Naive thymus-derived CD4-positive, alpha-beta T cell (primary cell): ENCODE measurements at regions of chr12 and their contacts with region 1.

Region 1: DNA sequence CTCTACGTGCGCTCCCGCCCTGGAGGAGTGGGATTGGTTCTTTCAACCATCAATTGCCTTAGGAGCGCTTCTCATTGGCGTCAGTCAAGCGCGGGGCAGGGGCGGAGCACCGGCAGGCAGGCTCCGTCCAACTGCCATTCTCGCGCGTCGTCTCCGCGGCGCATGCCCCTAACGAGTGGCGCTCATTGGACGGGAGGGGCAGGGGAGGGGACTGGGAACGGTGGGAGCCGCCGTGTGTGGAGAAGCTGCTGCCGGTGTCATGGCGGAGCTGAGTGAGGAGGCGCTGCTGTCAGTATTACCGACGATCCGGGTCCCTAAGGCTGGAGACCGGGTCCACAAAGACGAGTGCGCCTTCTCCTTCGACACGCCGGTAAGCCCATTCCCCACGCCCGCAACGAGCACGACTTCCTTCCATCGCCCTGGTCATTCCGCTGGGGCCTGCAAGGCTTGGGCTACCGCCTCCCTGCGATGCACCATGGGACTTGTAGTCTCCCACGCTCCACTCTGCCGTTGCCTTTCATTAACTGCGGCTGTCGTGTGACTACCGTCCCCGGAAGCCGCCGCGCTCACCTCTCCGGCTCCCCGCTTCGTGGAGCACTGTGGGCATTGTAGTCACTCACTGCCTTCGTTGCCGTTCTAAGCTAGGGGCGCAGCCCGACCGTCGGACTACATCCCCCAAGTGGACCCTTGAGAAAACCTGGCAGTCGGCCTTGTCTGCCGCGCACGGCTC is at the start of gene USP5:
- DNase-seq: peak; percentile 87 to 100 (median 99)
- ATAC-seq: peak; percentile 87
- H3K4me3 ChIP-seq: peak within 1 kb of the TSS; percentile 87
- H3K4me3 Mint-ChIP-seq: peak within 1 kb of the TSS; percentile 89 to 100 (median 94)
- H3K27ac ChIP-seq: peak within 1 kb of the TSS; percentile 85
- H3K27ac Mint-ChIP-seq: peak within 1 kb of the TSS; percentile 89 to 99 (median 97)
- H3K4me1 ChIP-seq: peaks cover 16 to 18% of the 10 kb centered on the region in 2 donors
- H3K4me1 Mint-ChIP-seq: peaks cover 12 to 38% (median 28%) of the 10 kb centered on the region in 7 donors
- H3K27me3 ChIP-seq: no peaks in the 10 kb centered on the region
- H3K27me3 Mint-ChIP-seq: no peaks in the 10 kb centered on the region
- total RNA-seq, gene USP5: 58.0 to 134 (median 71.1) TPM

Region 2: DNA sequence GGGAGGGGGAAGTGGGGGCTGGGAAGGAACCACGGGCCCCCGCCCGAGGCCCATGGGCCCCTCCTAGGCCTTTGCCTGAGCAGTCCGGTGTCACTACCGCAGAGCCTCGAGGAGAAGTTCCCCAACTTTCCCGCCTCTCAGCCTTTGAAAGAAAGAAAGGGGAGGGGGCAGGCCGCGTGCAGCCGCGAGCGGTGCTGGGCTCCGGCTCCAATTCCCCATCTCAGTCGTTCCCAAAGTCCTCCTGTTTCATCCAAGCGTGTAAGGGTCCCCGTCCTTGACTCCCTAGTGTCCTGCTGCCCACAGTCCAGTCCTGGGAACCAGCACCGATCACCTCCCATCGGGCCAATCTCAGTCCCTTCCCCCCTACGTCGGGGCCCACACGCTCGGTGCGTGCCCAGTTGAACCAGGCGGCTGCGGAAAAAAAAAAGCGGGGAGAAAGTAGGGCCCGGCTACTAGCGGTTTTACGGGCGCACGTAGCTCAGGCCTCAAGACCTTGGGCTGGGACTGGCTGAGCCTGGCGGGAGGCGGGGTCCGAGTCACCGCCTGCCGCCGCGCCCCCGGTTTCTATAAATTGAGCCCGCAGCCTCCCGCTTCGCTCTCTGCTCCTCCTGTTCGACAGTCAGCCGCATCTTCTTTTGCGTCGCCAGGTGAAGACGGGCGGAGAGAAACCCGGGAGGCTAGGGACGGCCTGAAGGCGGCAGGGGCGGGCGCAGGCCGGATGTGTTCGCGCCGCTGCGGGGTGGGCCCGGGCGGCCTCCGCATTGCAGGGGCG is 318.0 kb before region 1 on chr12 and contains the start of gene GAPDH:
- CTCF ChIA-PET with region 1: no interaction called
- POLR2A ChIA-PET with region 1: no interaction called
- intact Hi-C with region 1: loop called in 1 of 2 experiments (anchors 1 kb)
- DNase-seq: peak; percentile 66 to 94 (median 83)
- ATAC-seq: peak; percentile 66
- H3K4me3 ChIP-seq: peak within 1 kb of the TSS; percentile 97
- H3K4me3 Mint-ChIP-seq: peak within 1 kb of the TSS; percentile 90 to 99 (median 94)
- H3K27ac ChIP-seq: peak within 1 kb of the TSS; percentile 81
- H3K27ac Mint-ChIP-seq: peak within 1 kb of the TSS; percentile 92 to 100 (median 94)
- H3K4me1 ChIP-seq: peaks cover 31 to 43% of the 10 kb centered on the region in 2 donors
- H3K4me1 Mint-ChIP-seq: peaks cover 28 to 59% (median 42%) of the 10 kb centered on the region in 7 donors
- H3K27me3 ChIP-seq: no peaks in the 10 kb centered on the region
- H3K27me3 Mint-ChIP-seq: peaks cover 0 to 2% (median 0%) of the 10 kb centered on the region in 5 donors
- total RNA-seq, gene GAPDH: 330 to 4,503 (median 379) TPM

Region 3: GRCh38 chr12:6688999-6689882 is 162.8 kb before region 1 on chr12 and contains the start of gene ZNF384:
- CTCF ChIA-PET with region 1: no interaction called
- POLR2A ChIA-PET with region 1: interaction called, 31 read pairs
- intact Hi-C with region 1: loop called (anchors 1 kb)
- DNase-seq: peak; percentile 83 to 98 (median 96)
- ATAC-seq: peak; percentile 91
- H3K4me3 ChIP-seq: peak within 1 kb of the TSS; percentile 84
- H3K4me3 Mint-ChIP-seq: peak within 1 kb of the TSS; percentile 85 to 100 (median 96)
- H3K27ac ChIP-seq: peak within 1 kb of the TSS; percentile 91
- H3K27ac Mint-ChIP-seq: peak within 1 kb of the TSS; percentile 93 to 99 (median 98)
- H3K4me1 ChIP-seq: peaks cover 17 to 19% of the 10 kb centered on the region in 2 donors
- H3K4me1 Mint-ChIP-seq: peaks cover 37 to 69% (median 53%) of the 10 kb centered on the region in 7 donors
- H3K27me3 ChIP-seq: no peaks in the 10 kb centered on the region
- H3K27me3 Mint-ChIP-seq: no peaks in the 10 kb centered on the region
- total RNA-seq, gene ZNF384: 62.8 to 98.2 (median 85.4) TPM

Region 4: GRCh38 chr12:6825398-6826124 is 26.5 kb before region 1 on chr12:
- CTCF ChIA-PET with region 1: interaction called, 5 read pairs
- POLR2A ChIA-PET with region 1: interaction called, 39 read pairs
- intact Hi-C with region 1: loop called in 1 of 2 experiments (anchors 1 kb)
- DNase-seq: peak; percentile 69 to 89 (median 78)
- ATAC-seq: peak; percentile 79
- H3K4me3 ChIP-seq: no peak overlapping the region
- H3K4me3 Mint-ChIP-seq: peak overlapping the region in 7 of 10 donors; percentile 5 to 65 (median 35)
- H3K27ac ChIP-seq: no peak overlapping the region
- H3K27ac Mint-ChIP-seq: peak overlapping the region in 4 of 9 donors; percentile 22 to 84 (median 53)
- H3K4me1 ChIP-seq: peaks cover 4 to 13% of the 10 kb centered on the region in 2 donors
- H3K4me1 Mint-ChIP-seq: peaks cover 27 to 42% (median 39%) of the 10 kb centered on the region in 7 donors
- H3K27me3 ChIP-seq: peaks cover 0 to 12% of the 10 kb centered on the region in 2 donors
- H3K27me3 Mint-ChIP-seq: peaks cover 9 to 63% (median 26%) of the 10 kb centered on the region in 5 donors

Region 5: DNA sequence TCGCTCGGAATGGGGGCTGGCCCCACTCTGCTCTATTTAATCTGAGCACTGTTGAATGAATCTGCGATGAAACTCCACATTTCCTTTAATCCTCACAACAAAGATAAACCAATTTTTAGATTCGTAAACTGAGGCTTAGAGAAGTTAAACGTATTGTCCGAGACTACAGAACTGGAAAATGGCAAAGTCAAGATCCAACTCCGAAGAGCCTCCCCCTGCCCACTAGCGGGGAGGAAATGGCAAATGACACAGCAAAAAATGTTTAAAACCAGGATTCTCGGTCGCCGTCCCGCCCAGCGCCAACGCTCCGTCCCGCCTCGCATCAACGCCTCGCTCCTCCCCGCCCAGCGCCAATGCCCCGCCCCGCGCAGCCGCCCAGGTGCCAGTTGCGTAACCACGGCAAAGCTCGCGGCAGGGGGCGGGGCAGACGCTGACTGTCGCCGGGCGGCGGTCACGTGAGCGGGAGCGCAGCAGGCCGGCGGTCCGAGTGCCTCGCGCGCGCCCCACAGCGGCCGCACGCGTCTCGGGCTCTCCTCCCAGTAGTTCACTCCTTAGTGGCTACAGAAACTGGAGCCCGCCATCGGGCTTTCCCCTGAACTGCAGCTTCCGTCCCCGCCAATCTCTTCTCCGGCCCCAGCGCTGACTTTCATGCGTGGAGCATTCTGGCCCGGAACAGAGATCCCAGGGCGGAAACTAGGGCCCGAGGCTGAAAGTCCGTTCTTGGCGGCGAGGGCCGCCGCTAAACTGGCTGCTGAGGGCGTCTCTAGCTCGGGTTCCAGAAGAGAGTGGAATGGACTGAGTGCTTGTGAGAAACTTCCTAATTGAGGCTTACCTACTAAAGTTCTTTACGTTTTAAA is 38.9 kb after region 1 on chr12:
- CTCF ChIA-PET with region 1: interaction called, 7 read pairs
- POLR2A ChIA-PET with region 1: interaction called, 13 read pairs
- intact Hi-C with region 1: loop called (anchors 1 kb)
- DNase-seq: peak; percentile 95 to 100 (median 97)
- ATAC-seq: peak; percentile 96
- H3K4me3 ChIP-seq: peak overlapping the region; percentile 93
- H3K4me3 Mint-ChIP-seq: peak overlapping the region; percentile 78 to 86 (median 84)
- H3K27ac ChIP-seq: peak overlapping the region; percentile 86
- H3K27ac Mint-ChIP-seq: peak overlapping the region; percentile 82 to 94 (median 90)
- H3K4me1 ChIP-seq: peaks cover 6 to 10% of the 10 kb centered on the region in 2 donors
- H3K4me1 Mint-ChIP-seq: peaks cover 0 to 31% (median 11%) of the 10 kb centered on the region in 7 donors
- H3K27me3 ChIP-seq: no peaks in the 10 kb centered on the region
- H3K27me3 Mint-ChIP-seq: no peaks in the 10 kb centered on the region

Region 6: DNA sequence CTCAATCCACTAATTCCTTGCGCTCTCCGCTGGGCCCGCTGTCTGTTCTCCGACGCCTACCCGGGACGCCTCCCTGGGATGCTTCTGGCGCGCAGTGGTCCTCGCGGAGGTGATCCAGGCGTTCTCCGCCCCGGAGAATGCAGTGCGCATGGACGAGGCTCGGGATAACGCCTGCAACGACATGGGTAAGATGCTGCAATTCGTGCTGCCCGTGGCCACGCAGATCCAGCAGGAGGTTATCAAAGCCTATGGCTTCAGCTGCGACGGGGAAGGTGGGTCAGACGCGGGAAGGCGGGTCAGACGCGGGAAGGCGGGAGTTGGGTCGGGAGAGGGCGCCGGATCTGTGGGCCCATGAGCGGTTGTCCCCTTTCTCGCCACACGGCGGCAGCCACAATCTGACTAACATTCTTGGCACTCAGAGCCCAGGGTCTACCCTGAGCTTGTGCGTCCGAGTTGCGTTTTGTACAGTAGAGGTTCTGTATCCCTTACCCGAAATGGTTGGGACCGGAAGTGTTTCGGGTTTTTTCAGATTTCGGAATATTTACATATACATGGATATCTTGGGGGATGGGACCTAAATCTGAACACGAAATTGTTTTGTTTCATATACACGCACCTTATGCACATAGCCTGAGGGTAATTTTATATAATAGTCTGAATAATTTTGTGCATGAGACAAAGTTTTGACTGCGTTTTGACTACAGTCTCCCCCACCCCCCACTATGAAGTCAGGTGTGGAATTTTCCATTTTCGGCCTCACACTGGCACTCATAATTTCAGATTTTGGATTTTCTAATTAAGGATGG is 92.5 kb after region 1 on chr12:
- CTCF ChIA-PET with region 1: interaction called, 5 read pairs
- POLR2A ChIA-PET with region 1: interaction called, 19 read pairs
- intact Hi-C with region 1: loop called (anchors 1 kb)
- DNase-seq: peak; percentile 70 to 87 (median 84)
- ATAC-seq: peak; percentile 65
- H3K4me3 ChIP-seq: peak overlapping the region; percentile 94
- H3K4me3 Mint-ChIP-seq: peak overlapping the region; percentile 88 to 100 (median 96)
- H3K27ac ChIP-seq: peak overlapping the region; percentile 95
- H3K27ac Mint-ChIP-seq: peak overlapping the region; percentile 95 to 100 (median 98)
- H3K4me1 ChIP-seq: peaks cover 56% of the 10 kb centered on the region in 2 donors
- H3K4me1 Mint-ChIP-seq: peaks cover 42 to 75% (median 60%) of the 10 kb centered on the region in 7 donors
- H3K27me3 ChIP-seq: no peaks in the 10 kb centered on the region
- H3K27me3 Mint-ChIP-seq: no peaks in the 10 kb centered on the region

Region 7: DNA sequence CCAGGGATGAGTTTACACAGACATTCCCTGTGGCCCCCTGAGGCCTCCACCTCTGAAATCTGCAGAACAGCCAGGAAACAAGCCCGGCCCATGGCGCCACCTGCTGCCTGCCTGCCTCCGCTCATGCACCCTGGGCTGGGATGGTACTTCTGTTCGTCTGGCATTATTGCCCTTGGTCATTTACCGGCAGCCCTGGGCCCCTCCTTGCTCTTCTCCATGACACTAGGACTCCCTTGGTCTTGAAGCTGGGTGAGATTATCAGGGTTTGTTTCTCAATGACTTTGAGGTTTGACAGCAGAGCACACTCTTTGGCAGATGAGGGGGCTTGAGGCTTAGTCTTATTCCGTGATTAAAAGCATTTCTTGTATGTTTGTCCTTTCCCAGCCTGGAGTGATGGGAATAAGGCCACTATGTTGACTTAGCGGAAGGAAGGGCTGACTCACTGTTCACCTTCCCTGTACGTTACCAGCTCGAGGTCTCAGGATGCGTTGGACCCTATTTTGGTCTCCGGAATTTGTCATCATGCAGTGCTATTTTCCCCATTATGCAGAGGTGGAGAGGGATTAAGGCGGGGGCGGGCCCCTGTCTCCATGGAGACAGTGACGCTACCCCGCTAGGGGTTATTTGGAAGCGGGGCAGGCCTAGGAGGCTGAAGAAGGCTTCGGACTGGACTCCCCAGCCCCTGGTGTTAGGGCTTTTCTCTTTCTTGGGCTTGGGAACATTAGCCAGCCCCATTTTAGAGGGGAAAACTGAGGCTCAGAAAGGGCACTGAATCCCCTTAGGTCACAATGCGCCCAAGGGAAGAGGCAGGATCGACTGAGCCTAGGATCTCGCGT is 336.7 kb after region 1 on chr12:
- CTCF ChIA-PET with region 1: no interaction called
- POLR2A ChIA-PET with region 1: no interaction called
- intact Hi-C with region 1: loop called in 1 of 2 experiments (anchors 5 kb)
- DNase-seq: peak; percentile 34 to 64 (median 58)
- ATAC-seq: peak; percentile 40
- H3K4me3 ChIP-seq: peak overlapping the region; percentile 89
- H3K4me3 Mint-ChIP-seq: peak overlapping the region; percentile 92 to 99 (median 97)
- H3K27ac ChIP-seq: peak overlapping the region; percentile 92
- H3K27ac Mint-ChIP-seq: peak overlapping the region; percentile 93 to 99 (median 98)
- H3K4me1 ChIP-seq: peaks cover 10 to 28% of the 10 kb centered on the region in 2 donors
- H3K4me1 Mint-ChIP-seq: peaks cover 18 to 48% (median 40%) of the 10 kb centered on the region in 7 donors
- H3K27me3 ChIP-seq: no peaks in the 10 kb centered on the region
- H3K27me3 Mint-ChIP-seq: no peaks in the 10 kb centered on the region